ENCODE measurements at regions of chr17 and their contacts with region 1.

Region 1: GRCh38 chr17:15502369-15503112 is 35.1 kb upstream of the CDRT4 start:
- DNase-seq: peak; percentile 74 to 89 (median 84)
- H3K4me3 ChIP-seq: peak overlapping the region in 55 of 59 donors; percentile 4 to 61 (median 39)
- H3K27ac ChIP-seq: peak overlapping the region in 56 of 59 donors; percentile 2 to 89 (median 77)
- H3K27me3 ChIP-seq: no peaks in the 10 kb centered on the region
- CTCF ChIP-seq: peak; percentile 48 to 94 (median 86)

Region 2: DNA sequence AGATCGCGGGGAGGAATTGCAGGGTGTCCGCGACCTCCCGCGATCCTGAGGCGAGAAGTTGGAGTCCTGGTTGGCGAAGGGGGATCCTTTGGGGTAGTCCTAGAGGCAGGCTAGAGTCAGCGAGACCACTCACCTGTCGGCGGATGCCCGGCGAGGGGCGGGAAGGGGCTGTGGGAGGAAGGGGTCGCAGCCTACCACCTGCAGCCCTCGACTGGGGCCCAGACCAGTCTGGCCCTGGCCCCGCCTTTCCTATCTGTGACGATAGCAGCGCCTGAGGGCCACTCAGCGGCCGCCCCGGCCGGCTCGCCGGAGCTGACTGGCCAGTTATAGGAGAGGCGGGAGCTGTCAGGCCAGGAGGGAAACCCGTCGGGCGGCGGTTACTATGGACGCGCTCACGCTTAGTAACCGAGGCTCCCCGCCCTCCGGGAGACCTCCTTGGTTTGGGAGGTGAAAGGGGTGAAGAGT is 161.1 kb before region 1 on chr17 and contains the start of gene TEKT3:
- intact Hi-C with region 1: loop called in 1 of 2 experiments (anchors 10 kb)
- DNase-seq: peak; percentile 45 to 89 (median 77)
- H3K4me3 ChIP-seq: peak within 1 kb of the TSS; percentile 33 to 81 (median 62)
- H3K27ac ChIP-seq: peak within 1 kb of the TSS in 2 of 59 donors; percentile 15 to 58
- H3K27me3 ChIP-seq: peaks cover 0 to 23% (median 0%) of the 10 kb centered on the region in 45 donors
- CTCF ChIP-seq: peak in 3 of 56 donors; percentile 11 to 18 (median 14)
- total RNA-seq, gene TEKT3: 0.44 to 7.4 (median 2.7) TPM in 116 of 120 experiments, not detected in the others

Region 3: DNA sequence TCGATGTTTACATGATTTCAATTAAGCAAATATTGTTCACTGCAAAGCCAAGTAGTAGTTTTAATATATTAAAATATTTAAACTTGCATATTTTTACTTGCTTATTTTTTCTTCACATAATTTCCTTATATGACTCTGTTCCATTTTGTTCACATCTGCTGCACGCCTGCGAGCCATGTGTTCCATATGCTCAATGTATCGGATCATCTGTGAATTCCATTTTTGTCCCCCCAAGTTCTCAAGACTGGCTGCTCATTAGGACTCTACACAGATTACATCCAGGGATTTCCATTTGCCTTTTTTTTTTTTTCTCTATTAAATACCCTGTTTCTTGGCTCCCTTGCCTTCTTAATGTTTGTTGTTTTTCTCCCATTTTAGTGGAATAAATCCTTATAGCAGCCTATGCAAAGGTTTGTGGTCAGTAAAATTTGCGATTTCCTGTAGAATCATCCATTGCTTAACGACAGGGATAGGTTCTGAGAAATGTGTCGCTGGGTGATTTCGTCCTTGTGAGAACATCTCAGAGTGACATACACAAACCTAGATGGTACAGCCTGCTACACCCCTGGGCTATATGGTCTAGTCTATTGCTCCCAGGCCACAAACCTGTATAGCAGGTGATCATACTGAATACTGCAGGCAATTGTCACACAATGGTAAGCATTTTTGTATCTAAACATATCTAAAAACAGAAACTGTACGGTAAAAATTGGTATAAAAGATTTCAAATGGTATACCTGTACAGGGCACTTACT is 131.0 kb before region 1 on chr17:
- intact Hi-C with region 1: no loop called
- DNase-seq: peak in 3 of 10 donors; percentile 36 to 43 (median 37)
- H3K4me3 ChIP-seq: no peak overlapping the region
- H3K27ac ChIP-seq: no peak overlapping the region
- H3K27me3 ChIP-seq: no peaks in the 10 kb centered on the region
- CTCF ChIP-seq: no peak

Region 4: GRCh38 chr17:15409721-15410250 is 92.8 kb before region 1 on chr17:
- intact Hi-C with region 1: no loop called
- DNase-seq: peak in 1 of 10 donors; percentile 34
- H3K4me3 ChIP-seq: peak overlapping the region in 23 of 59 donors; percentile 1 to 48 (median 26)
- H3K27ac ChIP-seq: peak overlapping the region in 3 of 59 donors; percentile 16 to 57 (median 48)
- H3K27me3 ChIP-seq: no peaks in the 10 kb centered on the region
- CTCF ChIP-seq: no peak

Region 5: DNA sequence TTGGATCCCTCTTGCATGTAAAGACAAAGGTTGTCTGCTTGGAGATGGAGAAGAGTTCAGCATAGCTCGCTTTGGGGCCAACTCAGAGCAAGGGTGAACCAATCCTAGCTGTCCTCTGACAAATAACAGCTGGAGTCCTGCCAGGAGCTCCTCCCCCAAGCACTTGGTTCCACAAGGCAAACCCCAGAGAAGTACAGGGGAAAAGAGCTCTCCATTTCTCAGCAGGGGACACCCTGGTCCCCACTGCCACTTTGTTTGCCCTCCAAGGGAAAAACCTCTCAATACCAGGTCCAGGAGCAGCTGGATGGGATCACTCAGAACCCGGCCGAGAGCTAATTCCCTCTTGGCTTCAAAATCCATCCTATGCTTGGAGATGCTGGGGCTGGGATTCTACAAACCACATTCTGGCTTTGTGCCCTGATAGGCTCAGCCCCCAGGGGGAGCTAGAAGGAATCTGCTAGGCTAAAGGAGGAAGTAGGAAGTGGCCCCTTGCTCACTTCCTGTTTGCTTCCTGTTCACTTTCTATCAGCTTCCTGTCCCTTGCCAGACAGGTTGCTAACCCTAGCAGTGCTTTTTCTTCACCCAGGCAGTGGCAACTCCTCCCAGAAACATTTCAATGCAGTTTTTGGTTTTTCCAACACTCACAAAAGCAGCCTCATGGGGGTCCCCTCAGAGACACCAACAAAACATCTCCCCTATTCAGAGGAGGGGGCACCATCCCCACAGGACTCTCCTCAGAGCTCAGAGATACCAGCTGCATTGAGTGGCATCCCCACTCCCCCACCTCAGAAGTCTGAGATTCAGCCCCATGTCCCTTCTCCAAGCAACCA is 65.9 kb before region 1 on chr17:
- intact Hi-C with region 1: loop called in 1 of 2 experiments (anchors 5 kb)
- DNase-seq: peak in 7 of 10 donors; percentile 47 to 79 (median 56)
- H3K4me3 ChIP-seq: peak overlapping the region in 3 of 59 donors; percentile 2 to 32 (median 14)
- H3K27ac ChIP-seq: peak overlapping the region in 54 of 59 donors; percentile 12 to 90 (median 73)
- H3K27me3 ChIP-seq: no peaks in the 10 kb centered on the region
- CTCF ChIP-seq: peak in 51 of 56 donors; percentile 8 to 64 (median 43)

Region 6: DNA sequence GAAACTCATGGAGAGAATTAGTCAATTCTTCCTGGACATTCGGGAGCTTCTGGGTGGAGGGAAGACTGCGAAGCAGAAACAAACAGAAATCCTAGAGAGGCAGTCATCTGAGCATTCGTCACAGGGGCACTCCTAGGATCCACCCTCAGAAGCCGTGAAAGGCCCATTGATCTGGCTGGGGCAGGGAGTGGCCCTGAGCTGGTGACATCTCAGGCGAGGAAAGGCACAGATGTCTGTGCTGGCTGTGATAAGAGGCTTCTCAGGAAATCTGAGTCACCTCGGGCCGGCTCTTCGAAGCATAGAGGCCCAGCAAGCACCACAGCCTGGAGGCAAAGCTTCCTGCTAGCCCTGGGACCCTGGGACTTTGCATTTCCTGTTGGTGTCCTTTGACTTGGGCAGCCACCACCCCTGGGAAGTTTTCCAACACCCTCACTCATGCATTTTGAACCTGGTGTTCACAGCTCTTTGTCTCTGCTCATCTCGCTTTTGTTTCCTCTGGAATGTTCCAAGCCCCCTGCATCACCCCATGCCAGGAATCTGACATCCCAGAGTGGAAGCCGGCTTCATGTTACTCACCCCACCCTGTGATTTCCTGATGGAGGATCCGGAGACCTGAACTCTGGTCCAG is 11.8 kb before region 1 on chr17:
- intact Hi-C with region 1: no loop called
- DNase-seq: peak; percentile 9 to 80 (median 72)
- H3K4me3 ChIP-seq: peak overlapping the region in 8 of 59 donors; percentile 0 to 35 (median 16)
- H3K27ac ChIP-seq: peak overlapping the region; percentile 18 to 94 (median 86)
- H3K27me3 ChIP-seq: no peaks in the 10 kb centered on the region
- CTCF ChIP-seq: peak in 5 of 56 donors; percentile 5 to 25 (median 15)

Region 7: DNA sequence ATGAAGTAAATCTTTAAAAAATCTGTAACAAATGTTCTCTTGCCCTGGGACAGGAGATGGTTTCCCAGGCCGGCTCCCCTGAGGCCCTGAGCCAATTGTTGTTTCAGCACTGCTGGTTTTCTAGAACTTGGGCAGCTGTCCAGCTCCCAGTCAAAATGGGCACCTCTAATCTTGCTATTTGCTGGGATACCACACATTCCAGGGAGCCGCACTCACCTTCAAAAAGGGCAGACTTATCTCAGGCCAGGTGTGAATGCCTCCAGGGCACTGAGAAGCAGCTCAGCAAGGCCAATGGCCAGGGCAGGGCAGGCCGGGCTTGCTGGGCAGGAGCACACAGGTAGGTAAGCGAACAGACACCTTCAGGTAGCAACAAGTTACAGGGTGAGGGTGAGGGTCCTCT is 157.1 kb after region 1 on chr17:
- intact Hi-C with region 1: no loop called
- DNase-seq: peak in 1 of 10 donors; percentile 7
- H3K4me3 ChIP-seq: no peak overlapping the region
- H3K27ac ChIP-seq: no peak overlapping the region
- H3K27me3 ChIP-seq: no peaks in the 10 kb centered on the region
- CTCF ChIP-seq: no peak

Measured in dorsolateral prefrontal cortex (tissue), 120 donors.